OCI-LY7 (cell line): ENCODE measurements at regions of chr2 and their contacts with region 1.

Region 1: GRCh38 chr2:241391892-241392665 is 36.0 kb downstream of the FARP2 start:
- DNase-seq: peak; percentile 65
- H3K4me3 ChIP-seq: no peak overlapping the region
- H3K27ac ChIP-seq: no peak overlapping the region
- H3K4me1 ChIP-seq: peaks cover 13% of the 10 kb centered on the region
- CTCF ChIP-seq: peak; percentile 82

Region 2: GRCh38 chr2:241217320-241218031 is 174.6 kb before region 1 on chr2:
- CTCF ChIA-PET with region 1: no interaction called
- POLR2A ChIA-PET with region 1: no interaction called
- intact Hi-C with region 1: loop called (anchors 5 kb)
- DNase-seq: peak; percentile 66
- H3K4me3 ChIP-seq: no peak overlapping the region
- H3K27ac ChIP-seq: no peak overlapping the region
- H3K4me1 ChIP-seq: peaks cover 11% of the 10 kb centered on the region
- CTCF ChIP-seq: no peak

Region 3: DNA sequence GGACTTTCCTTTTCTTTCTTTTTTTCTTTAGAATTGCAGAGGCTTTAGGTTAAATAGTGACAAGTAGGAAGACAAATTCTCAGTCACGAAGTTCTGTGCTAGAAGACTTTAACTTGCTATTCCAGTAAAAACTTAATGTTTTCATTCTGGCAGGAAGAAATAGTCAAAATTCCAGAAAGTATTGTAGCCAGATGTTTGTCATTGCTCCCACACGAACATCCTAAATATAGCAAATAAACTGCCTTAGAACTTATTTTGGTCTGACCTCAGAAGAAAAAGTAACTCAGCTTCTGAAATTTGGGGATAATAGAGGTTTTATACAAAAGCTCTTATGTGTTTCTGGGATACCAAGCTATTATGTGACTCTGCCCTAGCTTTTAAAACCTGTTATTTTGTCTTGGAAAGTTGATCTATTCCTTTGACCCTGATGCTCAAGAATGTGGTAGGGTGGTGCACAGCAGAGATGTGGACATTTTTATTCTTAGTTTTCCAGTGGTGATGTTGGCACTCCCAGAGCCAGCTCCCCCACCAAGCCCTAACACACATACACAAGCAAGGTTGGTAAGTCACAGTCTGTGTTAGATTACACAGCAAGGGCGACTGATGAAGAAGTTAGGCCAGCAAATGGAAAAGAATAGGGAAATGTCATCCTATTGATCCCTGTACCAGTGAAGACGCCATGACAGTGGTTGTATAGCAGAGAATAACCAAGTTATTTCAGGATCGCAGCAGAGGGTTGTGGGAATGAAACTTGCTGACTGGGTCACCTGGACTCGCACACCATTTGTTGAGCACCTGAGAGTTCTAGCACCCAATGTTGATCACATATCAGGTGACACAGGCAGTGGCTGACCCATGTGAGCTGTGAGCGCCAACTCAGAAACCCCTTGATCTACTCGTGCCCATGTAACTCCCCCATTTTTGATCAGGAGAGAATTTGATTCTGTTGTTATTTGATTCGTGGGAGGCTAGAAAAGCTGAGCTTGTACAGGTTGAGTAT is 12.3 kb before region 1 on chr2:
- CTCF ChIA-PET with region 1: no interaction called
- POLR2A ChIA-PET with region 1: interaction called, 11 read pairs
- intact Hi-C with region 1: no loop called
- DNase-seq: no peak
- H3K4me3 ChIP-seq: no peak overlapping the region
- H3K27ac ChIP-seq: no peak overlapping the region
- H3K4me1 ChIP-seq: peaks cover 8% of the 10 kb centered on the region
- CTCF ChIP-seq: no peak

Region 4: GRCh38 chr2:241558532-241559322 is 166.6 kb after region 1 on chr2 and contains the start of gene BOK:
- CTCF ChIA-PET with region 1: no interaction called
- POLR2A ChIA-PET with region 1: no interaction called
- intact Hi-C with region 1: no loop called
- DNase-seq: no peak
- H3K4me3 ChIP-seq: no peak within 1 kb of the TSS
- H3K27ac ChIP-seq: no peak within 1 kb of the TSS
- H3K4me1 ChIP-seq: peaks cover 7% of the 10 kb centered on the region
- CTCF ChIP-seq: no peak
- total RNA-seq, gene BOK: not detected in 2 replicates